Stomach (tissue), 19 donors: ENCODE measurements at regions of chr7 and their contacts with region 1.

Region 1: DNA sequence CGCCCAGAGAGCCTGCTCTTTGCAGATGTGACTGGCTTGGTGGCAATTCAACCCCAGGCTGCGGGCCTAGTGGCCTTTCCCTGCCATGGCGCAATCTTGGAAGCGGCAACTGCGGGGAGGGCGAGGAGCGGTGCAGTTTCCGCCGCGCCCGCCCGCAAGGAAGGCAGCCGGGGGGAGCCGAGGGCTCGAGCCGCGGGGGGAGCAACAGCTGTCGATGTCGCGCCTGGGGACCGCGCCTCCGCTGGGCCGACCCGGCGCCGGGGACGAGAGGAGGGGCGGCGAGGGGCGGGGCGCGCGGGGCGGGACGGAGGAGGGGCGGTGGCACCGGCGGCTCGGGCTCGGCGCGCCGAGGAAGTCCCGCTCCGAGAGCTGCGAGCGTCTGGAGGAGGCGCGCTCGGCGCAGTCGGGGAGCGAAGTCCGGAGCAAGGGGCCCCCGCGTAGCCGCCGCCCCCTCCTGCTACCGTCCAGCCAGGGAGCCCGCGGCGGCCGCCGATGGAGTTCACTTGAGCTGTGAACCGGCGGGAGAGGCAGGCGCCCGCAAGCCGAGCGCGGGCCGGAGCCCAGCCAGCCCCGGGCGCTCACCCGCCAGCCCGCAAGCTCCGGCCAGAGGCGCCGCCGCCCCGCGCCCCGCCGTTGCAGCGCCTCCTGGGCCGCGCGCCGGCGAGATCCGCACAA is 438.1 kb upstream of the GALNT17 start:
- DNase-seq: peak; percentile 76 to 92
- H3K4me3 ChIP-seq: peak overlapping the region; percentile 68 to 88 (median 79)
- H3K27ac ChIP-seq: peak overlapping the region; percentile 75 to 94 (median 92)
- H3K4me1 ChIP-seq: peaks cover 0 to 36% (median 27%) of the 10 kb centered on the region in 4 donors
- H3K27me3 ChIP-seq: peaks cover 0 to 22% (median 9%) of the 10 kb centered on the region in 3 donors
- CTCF ChIP-seq: peak in 4 of 7 experiments; percentile 11 to 27 (median 26)
- EP300 ChIP-seq: no peak
- POLR2A ChIP-seq: no peak

Region 2: GRCh38 chr7:70193514-70193913 is 500.3 kb before region 1 on chr7:
- intact Hi-C with region 1: loop called (anchors 10 kb)
- DNase-seq: peak in 1 of 2 donors; percentile 45
- H3K4me3 ChIP-seq: no peak overlapping the region
- H3K27ac ChIP-seq: no peak overlapping the region
- H3K4me1 ChIP-seq: peaks cover 0 to 6% (median 0%) of the 10 kb centered on the region in 4 donors
- H3K27me3 ChIP-seq: no peaks in the 10 kb centered on the region
- CTCF ChIP-seq: peak in 1 of 7 experiments; percentile 34
- EP300 ChIP-seq: no peak
- POLR2A ChIP-seq: no peak